Heart right ventricle (tissue), 16 donors: ENCODE measurements at regions of chr15 and their contacts with region 1.

Region 1: DNA sequence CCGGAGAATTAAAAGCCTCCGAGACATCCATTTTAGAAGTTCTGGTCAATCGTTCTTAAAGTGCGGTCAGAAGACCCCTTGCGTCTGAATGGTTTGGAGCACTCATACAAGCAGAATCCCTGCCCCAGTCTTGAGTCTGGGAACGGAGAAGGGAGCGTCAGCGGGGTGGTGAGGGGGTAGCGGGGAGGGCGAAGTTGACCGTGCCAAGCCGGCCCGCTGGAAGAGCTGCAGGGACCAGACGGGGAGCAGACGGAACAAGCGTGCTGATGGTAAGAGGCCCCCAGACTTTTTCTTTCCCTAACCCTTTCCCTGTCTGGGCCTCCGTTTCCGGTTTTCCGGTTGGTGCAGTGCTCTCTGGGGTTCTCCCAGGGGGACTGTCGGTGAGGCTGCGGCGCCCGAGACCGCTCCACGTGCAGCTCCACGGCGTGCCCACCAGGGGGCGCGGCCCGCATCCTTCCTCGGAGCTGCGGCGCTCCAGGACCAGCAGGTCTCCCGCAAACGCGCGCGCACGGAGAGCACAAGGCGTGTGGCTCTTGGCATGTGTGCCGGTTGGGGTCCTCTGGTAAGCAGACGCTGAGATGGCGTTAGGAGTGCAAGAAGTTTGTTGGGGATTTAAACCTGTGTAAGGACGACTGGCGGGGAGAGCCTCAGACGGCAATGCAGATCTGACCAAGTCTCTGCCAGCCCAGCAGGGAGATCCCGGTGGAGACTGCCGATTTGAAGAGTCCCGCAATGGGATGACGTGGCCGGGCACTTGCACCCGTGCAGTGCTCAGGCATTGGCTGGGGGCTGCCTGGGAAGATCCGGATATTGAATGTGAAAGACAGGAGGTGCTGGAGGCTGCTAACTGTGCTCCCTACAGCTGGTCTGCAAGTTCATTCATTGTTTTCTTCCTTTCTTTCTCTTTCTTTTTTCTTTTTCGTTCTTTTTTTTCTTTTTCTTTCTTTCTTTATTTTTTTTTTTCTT is 19.2 kb upstream of the CORO2B start:
- DNase-seq: peak; percentile 76 to 86
- ATAC-seq: peak; percentile 92 to 98 (median 94)
- H3K4me3 ChIP-seq: peak overlapping the region in 9 of 10 donors; percentile 21 to 63 (median 50)
- H3K27ac ChIP-seq: peak overlapping the region in 3 of 10 donors; percentile 19 to 48 (median 44)
- H3K4me1 ChIP-seq: peaks cover 0 to 19% (median 7%) of the 10 kb centered on the region in 9 donors
- H3K27me3 ChIP-seq: peaks cover 0 to 23% (median 0%) of the 10 kb centered on the region in 7 donors
- CTCF ChIP-seq: peak; percentile 90 to 99 (median 98)

Region 2: GRCh38 chr15:68650901-68651709 is 91.5 kb after region 1 on chr15:
- intact Hi-C with region 1: loop called in 2 of 10 experiments (anchors 5 kb)
- DNase-seq: peak; percentile 59 to 73
- ATAC-seq: peak; percentile 48 to 76 (median 66)
- H3K4me3 ChIP-seq: no peak overlapping the region
- H3K27ac ChIP-seq: peak overlapping the region in 1 of 10 donors; percentile 45
- H3K4me1 ChIP-seq: peaks cover 0 to 12% (median 3%) of the 10 kb centered on the region in 9 donors
- H3K27me3 ChIP-seq: no peaks in the 10 kb centered on the region
- CTCF ChIP-seq: peak; percentile 44 to 84 (median 70)

Region 3: DNA sequence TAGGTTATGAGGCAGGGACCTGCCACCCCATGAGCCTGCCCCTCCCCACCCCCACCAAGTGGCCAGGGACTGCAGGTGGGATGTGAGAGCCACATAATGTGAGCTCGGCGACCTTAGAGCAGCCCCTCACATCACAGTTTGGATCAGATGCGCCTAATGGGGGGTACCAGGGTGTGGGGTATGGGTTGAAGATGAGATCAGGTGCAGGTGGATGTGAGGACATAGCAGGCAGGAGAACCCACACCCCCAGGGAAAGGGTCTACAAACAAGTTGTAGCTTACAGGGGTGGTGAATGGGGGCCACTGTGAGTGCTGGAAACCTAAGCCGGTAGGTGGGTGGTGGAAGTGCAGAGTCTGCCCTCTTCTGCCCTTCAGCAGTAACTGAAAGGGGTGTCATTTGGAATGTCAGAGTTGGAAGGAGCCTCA is 113.2 kb after region 1 on chr15:
- intact Hi-C with region 1: loop called (anchors 1 to 5 kb)
- DNase-seq: no peak
- ATAC-seq: peak in 1 of 8 donors; percentile 29
- H3K4me3 ChIP-seq: no peak overlapping the region
- H3K27ac ChIP-seq: no peak overlapping the region
- H3K4me1 ChIP-seq: peaks cover 4 to 28% (median 23%) of the 10 kb centered on the region in 9 donors
- H3K27me3 ChIP-seq: no peaks in the 10 kb centered on the region
- CTCF ChIP-seq: peak in 5 of 9 donors; percentile 11 to 32 (median 24)

Region 4: DNA sequence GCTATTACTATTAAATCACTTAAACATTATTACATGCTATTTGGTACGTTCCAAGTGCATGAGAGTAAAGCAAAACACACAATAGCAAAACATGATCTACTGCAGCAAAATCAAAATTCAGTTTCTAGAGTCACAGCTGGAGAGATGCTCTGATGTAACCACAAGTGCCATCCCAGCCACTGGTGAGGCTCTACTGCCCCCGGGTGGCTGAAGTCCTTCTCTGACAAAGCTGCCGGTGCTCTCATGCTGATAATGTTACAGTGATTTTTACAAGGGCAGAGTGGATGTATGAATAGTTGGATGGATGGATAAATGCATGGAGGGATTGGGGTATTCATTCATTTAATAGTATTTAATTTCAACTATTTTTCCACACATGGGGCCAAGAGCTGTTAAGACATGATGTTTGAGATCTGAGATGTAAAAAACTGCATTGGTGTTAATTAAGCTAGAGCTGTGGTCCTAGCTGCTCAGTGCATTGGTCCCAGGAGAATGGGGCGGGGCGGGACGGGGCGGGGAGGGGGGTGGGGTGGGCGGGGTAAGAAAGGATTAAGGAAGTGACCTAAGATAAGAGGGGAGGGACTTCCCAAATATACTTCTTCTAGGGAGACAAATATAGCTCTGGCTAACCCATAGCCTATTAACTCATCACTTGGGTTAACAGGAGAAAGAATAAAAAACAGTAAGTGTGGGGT is 365.4 kb after region 1 on chr15:
- intact Hi-C with region 1: loop called in 7 of 10 experiments (anchors 2 to 10 kb)
- DNase-seq: peak; percentile 69 to 74
- ATAC-seq: peak; percentile 53 to 92 (median 86)
- H3K4me3 ChIP-seq: no peak overlapping the region
- H3K27ac ChIP-seq: no peak overlapping the region
- H3K4me1 ChIP-seq: no peaks in the 10 kb centered on the region
- H3K27me3 ChIP-seq: peaks cover 0 to 4% (median 0%) of the 10 kb centered on the region in 7 donors
- CTCF ChIP-seq: peak; percentile 37 to 88 (median 84)